ENCODE measurements at regions of chr11 and their contacts with region 1.

Region 1: GRCh38 chr11:64276653-64277431 is 7.6 kb downstream of the BAD start:
- DNase-seq: no peak
- H3K4me3 ChIP-seq: no peak overlapping the region
- H3K27ac ChIP-seq: no peak overlapping the region
- H3K27me3 ChIP-seq: no peaks in the 10 kb centered on the region
- CTCF ChIP-seq: no peak

Region 2: GRCh38 chr11:63951779-63952536 is 324.9 kb before region 1 on chr11:
- CTCF ChIA-PET with region 1: no interaction called
- POLR2A ChIA-PET with region 1: no interaction called
- DNase-seq: no peak
- H3K4me3 ChIP-seq: no peak overlapping the region
- H3K27ac ChIP-seq: no peak overlapping the region
- H3K27me3 ChIP-seq: no peaks in the 10 kb centered on the region
- CTCF ChIP-seq: no peak

Region 3: DNA sequence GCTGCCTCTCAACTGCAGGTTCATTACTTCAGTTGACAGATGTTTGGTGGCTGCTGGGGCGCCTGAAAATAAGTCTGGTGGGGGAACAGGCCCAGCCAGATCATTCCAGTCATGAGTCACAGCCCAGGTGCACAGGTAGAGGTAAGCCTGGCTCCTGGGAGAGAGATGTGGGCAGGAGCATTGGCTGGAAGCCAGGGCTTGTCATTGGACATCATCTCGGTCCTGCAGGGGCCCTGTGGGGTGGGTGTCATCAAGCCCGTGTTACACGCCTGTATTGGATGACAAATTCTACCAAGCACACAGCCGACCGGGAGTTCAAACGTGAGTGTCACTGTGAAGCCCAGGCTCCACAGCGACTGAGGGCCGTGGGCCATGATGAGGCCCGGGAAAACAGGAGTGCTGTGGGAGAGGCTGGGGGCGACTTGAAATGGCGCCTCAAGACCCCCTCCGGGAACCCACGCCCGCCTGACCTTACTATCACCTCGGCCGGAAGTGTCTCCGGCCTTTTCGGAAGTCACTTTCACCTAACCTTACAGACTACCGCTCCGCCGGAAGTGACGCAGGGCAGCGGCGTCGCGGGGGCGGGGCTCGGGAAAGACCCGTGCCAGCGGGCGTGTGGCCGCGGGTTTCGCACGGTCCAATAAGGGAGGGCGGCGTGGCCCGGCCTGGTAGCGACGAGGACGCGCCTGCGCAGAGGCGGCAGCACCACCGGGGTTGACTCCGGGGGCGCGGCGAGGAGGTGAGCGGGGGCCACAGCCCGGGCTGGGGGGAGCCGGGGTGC is 36.3 kb before region 1 on chr11 and contains the start of gene FKBP2:
- CTCF ChIA-PET with region 1: interaction called, 11 read pairs
- POLR2A ChIA-PET with region 1: no interaction called
- DNase-seq: peak; percentile 90
- H3K4me3 ChIP-seq: peak within 1 kb of the TSS; percentile 84
- H3K27ac ChIP-seq: peak within 1 kb of the TSS; percentile 94
- H3K27me3 ChIP-seq: no peaks in the 10 kb centered on the region
- CTCF ChIP-seq: no peak
- polyA plus RNA-seq, gene FKBP2: 29.9 and 39.0 TPM in 2 replicates